ENCODE measurements at regions of chr1 and their contacts with region 1.

Region 1: GRCh38 chr1:93680757-93681550 is 683 bp downstream of the BCAR3 start:
- DNase-seq: peak; percentile 63
- H3K4me3 ChIP-seq: peak overlapping the region; percentile 78
- H3K27me3 ChIP-seq: no peaks in the 10 kb centered on the region
- CTCF ChIP-seq: peak; percentile 75

Region 2: GRCh38 chr1:93670141-93670540 is 10.8 kb before region 1 on chr1:
- CTCF ChIA-PET with region 1: interaction called, 17 read pairs
- POLR2A ChIA-PET with region 1: interaction called, 5 read pairs
- DNase-seq: no peak
- H3K4me3 ChIP-seq: no peak overlapping the region
- H3K27me3 ChIP-seq: no peaks in the 10 kb centered on the region
- CTCF ChIP-seq: no peak

Region 3: DNA sequence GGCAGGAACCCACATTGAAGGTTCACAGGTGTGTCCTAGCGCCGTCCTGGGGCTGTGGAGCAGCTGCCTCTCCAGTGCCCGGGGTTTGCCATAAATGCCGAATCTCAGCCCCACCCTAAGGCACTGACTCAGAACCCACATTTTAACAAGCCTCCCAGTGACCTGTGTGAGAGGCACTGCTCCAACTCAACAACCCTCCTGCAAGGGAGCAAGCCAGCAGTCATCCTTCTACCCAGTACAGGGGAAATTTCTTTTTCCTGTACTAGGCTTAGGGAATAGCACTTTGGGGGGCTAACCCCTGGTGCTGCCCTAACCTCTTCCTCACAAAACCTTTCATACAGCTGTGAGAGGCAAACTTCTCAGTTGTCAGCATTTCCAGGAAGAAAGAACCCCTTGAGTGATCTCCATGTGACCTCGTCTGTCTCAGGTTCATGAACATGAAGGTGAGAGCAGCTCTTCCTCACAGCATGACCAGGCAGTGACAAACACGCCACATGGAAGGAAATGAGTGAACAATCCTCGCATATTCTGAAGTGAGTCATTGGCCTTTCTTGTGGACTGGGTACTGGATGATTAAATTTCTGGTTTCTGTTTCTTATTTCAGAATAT is 12.1 kb after region 1 on chr1:
- CTCF ChIA-PET with region 1: interaction called, 14 read pairs
- POLR2A ChIA-PET with region 1: interaction called, 5 read pairs
- DNase-seq: peak; percentile 59
- H3K4me3 ChIP-seq: no peak overlapping the region
- H3K27me3 ChIP-seq: no peaks in the 10 kb centered on the region
- CTCF ChIP-seq: no peak